ENCODE measurements at regions of chr1 and their contacts with region 1.

Region 1: GRCh38 chr1:166630369-166630768 is 208.9 kb upstream of the POGK start:
- DNase-seq: no peak
- ATAC-seq: no peak

Region 2: DNA sequence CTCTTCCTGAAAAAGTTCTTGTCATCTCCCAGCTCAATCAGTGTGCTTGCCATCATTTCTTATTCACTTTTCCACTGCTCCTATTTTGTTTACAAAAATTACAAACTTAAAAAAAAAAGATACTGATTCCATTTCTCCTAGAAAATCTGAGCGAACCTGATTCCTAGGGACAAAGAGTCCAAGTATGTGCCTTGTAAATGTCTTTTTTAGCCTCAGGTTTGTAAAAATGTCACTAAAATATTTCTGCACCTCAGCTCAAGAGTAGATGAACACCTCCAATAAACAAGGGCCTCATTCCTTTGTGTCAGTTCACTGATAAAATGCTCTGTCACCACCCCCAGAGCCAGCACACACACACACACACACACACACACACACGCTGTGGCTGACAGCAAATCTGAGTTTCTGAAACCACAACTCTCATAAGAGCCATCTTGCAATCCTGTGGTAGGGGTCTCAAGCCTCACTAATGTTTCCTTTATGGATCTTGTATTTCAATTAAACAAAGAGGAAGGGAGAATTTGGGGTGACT is 1772.2 kb before region 1 on chr1:
- intact Hi-C with region 1: no loop called
- DNase-seq: no peak
- ATAC-seq: no peak

Region 3: GRCh38 chr1:165056914-165057313 is 1573.5 kb before region 1 on chr1:
- intact Hi-C with region 1: loop called (anchors 5 kb)
- DNase-seq: no peak
- ATAC-seq: no peak